A673 (cell line): ENCODE measurements at regions of chr18 and their contacts with region 1.

Region 1: DNA sequence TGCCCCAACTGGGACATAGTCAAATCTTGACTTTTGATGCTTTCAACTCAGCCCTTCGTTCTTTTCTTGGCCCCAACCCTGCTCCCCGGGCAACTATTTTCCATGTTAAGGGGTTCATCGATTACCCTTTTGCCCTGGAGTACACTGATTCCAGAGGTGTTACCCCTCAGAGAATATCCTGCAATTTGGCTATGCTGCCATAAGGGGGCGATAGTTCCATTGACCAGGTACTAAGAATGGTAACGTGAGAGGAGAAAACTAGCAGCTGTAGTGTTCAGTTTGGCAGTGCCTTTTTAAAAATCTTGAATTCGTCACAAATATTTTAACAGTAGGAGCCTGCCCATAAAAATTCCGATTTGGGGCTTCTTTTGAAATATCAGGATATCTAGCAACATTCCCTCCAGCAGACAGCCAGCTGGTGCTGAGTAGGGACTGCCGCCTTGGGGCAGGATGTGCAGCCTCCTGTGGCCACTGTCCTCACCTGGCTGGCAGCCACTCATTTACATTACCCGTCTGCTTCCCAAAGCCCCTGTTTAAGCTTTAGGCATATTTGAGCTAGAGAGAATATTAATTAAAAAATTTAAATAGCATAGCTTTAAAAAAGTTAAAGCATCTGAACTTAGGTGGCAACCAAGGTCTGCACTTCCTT is 146.3 kb upstream of the SKOR2 start:
- DNase-seq: peak; percentile 4
- H3K4me3 ChIP-seq: no peak overlapping the region
- H3K27ac ChIP-seq: no peak overlapping the region
- H3K4me1 ChIP-seq: no peaks in the 10 kb centered on the region
- H3K27me3 ChIP-seq: peaks cover 16% of the 10 kb centered on the region
- CTCF ChIP-seq: peak; percentile 53

Region 2: DNA sequence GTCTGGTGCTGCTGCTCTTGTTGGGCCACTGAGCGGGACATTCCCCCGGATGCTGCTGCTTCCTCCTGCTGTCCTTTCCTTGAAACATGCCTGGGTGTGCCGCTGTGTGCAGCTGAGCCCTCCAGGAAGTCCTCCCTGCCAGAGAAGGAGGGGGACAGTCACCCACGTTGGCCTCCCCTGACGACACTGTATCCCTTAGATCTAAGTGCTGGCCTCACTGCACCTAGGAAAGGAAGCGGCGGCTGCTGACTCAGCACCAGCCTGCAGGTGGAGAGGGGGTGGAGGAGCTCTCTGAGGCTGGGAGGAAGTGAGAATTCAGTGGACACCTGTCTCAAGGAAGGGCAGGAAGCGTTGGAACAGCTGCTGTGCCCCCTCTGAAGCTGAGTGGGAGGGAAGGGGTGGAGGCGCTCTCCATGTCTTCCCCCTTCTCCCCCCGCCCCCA is 1053.8 kb before region 1 on chr18:
- CTCF ChIA-PET with region 1: interaction called, 12 read pairs
- POLR2A ChIA-PET with region 1: no interaction called
- intact Hi-C with region 1: no loop called
- DNase-seq: no peak
- H3K4me3 ChIP-seq: no peak overlapping the region
- H3K27ac ChIP-seq: no peak overlapping the region
- H3K4me1 ChIP-seq: no peaks in the 10 kb centered on the region
- H3K27me3 ChIP-seq: no peaks in the 10 kb centered on the region
- CTCF ChIP-seq: no peak

Region 3: DNA sequence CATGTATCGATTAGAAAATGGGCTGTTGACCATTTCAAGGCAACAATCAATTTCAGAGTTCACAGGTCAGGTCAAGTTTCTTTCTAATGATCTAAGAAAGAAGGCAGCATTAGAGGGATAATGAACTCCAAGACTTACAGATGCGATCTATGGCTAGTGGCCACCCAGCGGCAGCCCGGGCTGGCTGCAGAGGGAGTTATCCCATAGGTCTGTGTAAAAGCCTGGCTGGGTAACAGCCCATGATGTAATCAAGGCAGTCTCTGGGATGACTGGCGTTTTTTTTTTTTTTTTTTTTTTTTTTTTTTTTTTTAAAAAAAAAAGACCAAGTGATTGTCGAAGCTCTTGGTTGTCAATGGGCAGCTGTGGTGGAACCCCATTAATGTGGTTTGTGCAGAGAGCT is 24.7 kb after region 1 on chr18:
- CTCF ChIA-PET with region 1: interaction called, 12 read pairs
- POLR2A ChIA-PET with region 1: no interaction called
- intact Hi-C with region 1: no loop called
- DNase-seq: peak; percentile 6
- H3K4me3 ChIP-seq: no peak overlapping the region
- H3K27ac ChIP-seq: no peak overlapping the region
- H3K4me1 ChIP-seq: no peaks in the 10 kb centered on the region
- H3K27me3 ChIP-seq: peaks cover 29% of the 10 kb centered on the region
- CTCF ChIP-seq: no peak

Region 4: GRCh38 chr18:48274301-48274700 is 876.5 kb after region 1 on chr18:
- CTCF ChIA-PET with region 1: no interaction called
- POLR2A ChIA-PET with region 1: no interaction called
- intact Hi-C with region 1: no loop called
- DNase-seq: no peak
- H3K4me3 ChIP-seq: no peak overlapping the region
- H3K27ac ChIP-seq: no peak overlapping the region
- H3K4me1 ChIP-seq: no peaks in the 10 kb centered on the region
- H3K27me3 ChIP-seq: no peaks in the 10 kb centered on the region
- CTCF ChIP-seq: no peak